H1 (cell line): ENCODE measurements at regions of chr1 and their contacts with region 1.

Region 1: GRCh38 chr1:39016604-39017171 is 9.5 kb upstream of the NDUFS5 start:
- DNase-seq: peak in 1 of 2 experiments; percentile 63
- H3K4me3 ChIP-seq: peak overlapping the region in 2 of 4 experiments; percentile 3 to 8; a peak in 2 of 8 replicates
- H3K27ac ChIP-seq: peak overlapping the region; percentile 21; the same call in 1 of the 2 replicates
- H3K4me1 ChIP-seq: peaks cover 6 to 14% (median 8%) of the 10 kb centered on the region in 4 experiments; a peak in 5 of 7 replicates
- H3K27me3 ChIP-seq: no peaks in the 10 kb centered on the region; a peak in 1 of 7 replicates
- CTCF ChIP-seq: no peak
- EP300 ChIP-seq: peak in 1 of 2 experiments; percentile 41; a peak in 1 of 3 replicates
- POLR2A ChIP-seq: peak in 1 of 2 experiments; percentile 45; a peak in 2 of 3 replicates
- RAD21 ChIP-seq: no peak

Region 2: GRCh38 chr1:38990738-38991639 is 25.7 kb before region 1 on chr1 and contains the start of gene AKIRIN1:
- CTCF ChIA-PET with region 1: no interaction called
- POLR2A ChIA-PET with region 1: interaction called, 46 read pairs
- DNase-seq: peak; percentile 89 to 99
- H3K4me3 ChIP-seq: peak within 1 kb of the TSS; percentile 83 to 100 (median 92)
- H3K27ac ChIP-seq: peak within 1 kb of the TSS; percentile 95
- H3K4me1 ChIP-seq: peaks cover 5 to 18% (median 13%) of the 10 kb centered on the region in 4 experiments
- H3K27me3 ChIP-seq: no peaks in the 10 kb centered on the region
- CTCF ChIP-seq: no peak
- EP300 ChIP-seq: peak in 1 of 2 experiments; percentile 100; a peak in 2 of 3 replicates
- POLR2A ChIP-seq: peak; percentile 93 to 95
- RAD21 ChIP-seq: peak in 1 of 2 experiments; percentile 25; a peak in 2 of 4 replicates
- total RNA-seq, gene AKIRIN1: 236 TPM in 2 replicates

Region 3: GRCh38 chr1:38997034-38997900 is 19.4 kb before region 1 on chr1:
- CTCF ChIA-PET with region 1: no interaction called
- POLR2A ChIA-PET with region 1: interaction called, 182 read pairs
- DNase-seq: no peak
- H3K4me3 ChIP-seq: peak overlapping the region in 1 of 4 experiments; percentile 32; a peak in 2 of 8 replicates
- H3K27ac ChIP-seq: no peak overlapping the region; the same call in 1 of the 2 replicates
- H3K4me1 ChIP-seq: peaks cover 0 to 30% (median 16%) of the 10 kb centered on the region in 4 experiments
- H3K27me3 ChIP-seq: no peaks in the 10 kb centered on the region
- CTCF ChIP-seq: no peak
- EP300 ChIP-seq: no peak
- POLR2A ChIP-seq: no peak; a peak in 1 of 3 replicates
- RAD21 ChIP-seq: no peak

Region 4: DNA sequence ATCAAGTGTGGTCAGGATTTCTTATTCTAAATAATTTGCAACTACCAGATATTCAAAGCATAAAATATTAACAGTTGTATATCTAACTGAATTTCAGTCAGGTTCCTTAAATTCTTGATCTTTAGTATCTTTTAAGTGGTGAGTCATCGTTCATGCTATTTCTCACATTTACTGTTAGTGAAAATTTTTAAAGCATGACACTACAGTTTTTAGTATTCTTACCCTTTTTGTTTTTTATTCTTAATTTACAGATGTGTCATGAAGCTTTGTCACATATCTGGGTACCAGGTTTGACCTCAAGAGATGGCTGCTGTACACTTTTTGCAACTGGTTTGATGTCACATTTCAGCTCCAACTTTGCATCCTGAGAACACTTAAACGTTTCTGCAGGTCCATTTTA is 12.9 kb before region 1 on chr1:
- CTCF ChIA-PET with region 1: interaction called, 4 read pairs
- POLR2A ChIA-PET with region 1: interaction called, 182 read pairs
- DNase-seq: no peak
- H3K4me3 ChIP-seq: no peak overlapping the region
- H3K27ac ChIP-seq: no peak overlapping the region
- H3K4me1 ChIP-seq: peaks cover 0 to 10% (median 7%) of the 10 kb centered on the region in 4 experiments
- H3K27me3 ChIP-seq: no peaks in the 10 kb centered on the region
- CTCF ChIP-seq: no peak
- EP300 ChIP-seq: no peak
- POLR2A ChIP-seq: no peak
- RAD21 ChIP-seq: no peak

Region 5: DNA sequence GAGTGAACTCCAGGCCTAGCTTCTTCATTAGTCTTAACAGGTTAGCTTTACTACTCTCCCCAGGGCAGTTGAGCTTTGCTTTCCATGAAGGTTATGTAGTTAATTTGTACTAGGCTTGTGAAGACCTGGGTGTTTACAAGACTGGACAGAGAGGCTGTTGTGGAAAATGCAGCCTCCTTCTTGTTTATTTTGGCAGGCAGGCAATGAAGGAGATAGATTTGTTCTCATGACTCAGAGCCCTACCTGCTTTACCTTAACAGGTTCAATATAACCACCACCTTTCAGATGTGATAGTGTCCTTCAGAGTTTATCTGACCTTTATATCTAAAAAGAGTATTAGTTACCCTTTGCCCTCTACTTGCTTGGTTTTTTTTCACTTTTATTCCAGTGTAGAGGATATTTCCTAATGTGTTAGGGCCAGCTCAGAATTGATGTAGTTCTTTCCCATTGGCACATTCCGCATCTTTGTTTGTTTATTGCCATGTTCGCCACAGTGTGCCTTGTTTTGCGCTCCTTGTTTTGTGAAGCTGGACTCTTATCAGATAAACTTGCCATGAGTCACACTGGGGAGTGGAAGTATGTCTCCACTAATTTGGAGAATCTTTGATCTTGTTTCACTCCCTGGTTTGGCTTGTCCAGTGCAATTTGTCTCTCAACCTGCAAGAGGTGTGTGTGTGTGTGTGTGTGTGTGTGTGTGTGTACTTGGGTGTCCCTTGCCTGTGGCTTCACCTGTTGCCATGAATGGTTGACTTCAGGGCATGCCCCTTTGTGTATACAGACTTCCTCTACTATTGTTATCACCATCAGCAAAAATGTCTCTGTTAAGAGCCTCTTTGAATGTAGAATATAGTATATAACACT is 100.4 kb after region 1 on chr1:
- CTCF ChIA-PET with region 1: no interaction called
- POLR2A ChIA-PET with region 1: no interaction called
- DNase-seq: no peak
- H3K4me3 ChIP-seq: no peak overlapping the region
- H3K27ac ChIP-seq: no peak overlapping the region
- H3K4me1 ChIP-seq: peaks cover 0 to 3% (median 2%) of the 10 kb centered on the region in 4 experiments; a peak in 5 of 7 replicates
- H3K27me3 ChIP-seq: no peaks in the 10 kb centered on the region
- CTCF ChIP-seq: no peak
- EP300 ChIP-seq: no peak
- POLR2A ChIP-seq: no peak
- RAD21 ChIP-seq: no peak